ENCODE measurements at regions of chr1 and their contacts with region 1.

Region 1: GRCh38 chr1:221203224-221204054 is 324.2 kb downstream of the HLX start:
- DNase-seq: peak; percentile 61
- H3K4me3 ChIP-seq: no peak overlapping the region
- H3K27ac ChIP-seq: no peak overlapping the region
- H3K4me1 ChIP-seq: no peaks in the 10 kb centered on the region
- CTCF ChIP-seq: peak; percentile 84

Region 2: DNA sequence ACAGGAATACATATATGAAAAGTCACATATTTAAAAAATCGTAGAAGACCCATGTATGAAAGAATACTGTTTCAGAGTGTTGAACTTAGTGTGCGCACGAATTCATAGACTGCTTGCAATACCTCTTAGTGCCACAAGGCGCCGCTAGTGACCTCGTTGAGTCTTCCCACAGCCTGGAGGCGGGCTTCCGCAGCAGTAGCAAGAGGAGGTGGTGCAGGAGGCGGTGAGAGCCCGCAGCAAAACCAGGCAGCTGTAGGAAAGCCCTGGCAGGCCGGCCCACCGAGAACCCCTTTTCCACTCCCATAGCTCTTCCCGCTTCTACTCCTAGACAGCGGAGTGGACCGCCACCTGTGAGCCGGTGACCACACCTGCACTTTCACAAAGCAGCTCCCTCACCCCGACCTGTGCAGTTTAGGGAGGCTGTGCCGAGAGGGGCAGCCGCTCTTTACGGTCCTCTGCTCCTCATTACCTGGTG is 393.2 kb before region 1 on chr1:
- CTCF ChIA-PET with region 1: no interaction called
- POLR2A ChIA-PET with region 1: no interaction called
- intact Hi-C with region 1: loop called (anchors 2 kb)
- DNase-seq: peak; percentile 66
- H3K4me3 ChIP-seq: no peak overlapping the region
- H3K27ac ChIP-seq: no peak overlapping the region
- H3K4me1 ChIP-seq: no peaks in the 10 kb centered on the region
- CTCF ChIP-seq: peak; percentile 83

Region 3: DNA sequence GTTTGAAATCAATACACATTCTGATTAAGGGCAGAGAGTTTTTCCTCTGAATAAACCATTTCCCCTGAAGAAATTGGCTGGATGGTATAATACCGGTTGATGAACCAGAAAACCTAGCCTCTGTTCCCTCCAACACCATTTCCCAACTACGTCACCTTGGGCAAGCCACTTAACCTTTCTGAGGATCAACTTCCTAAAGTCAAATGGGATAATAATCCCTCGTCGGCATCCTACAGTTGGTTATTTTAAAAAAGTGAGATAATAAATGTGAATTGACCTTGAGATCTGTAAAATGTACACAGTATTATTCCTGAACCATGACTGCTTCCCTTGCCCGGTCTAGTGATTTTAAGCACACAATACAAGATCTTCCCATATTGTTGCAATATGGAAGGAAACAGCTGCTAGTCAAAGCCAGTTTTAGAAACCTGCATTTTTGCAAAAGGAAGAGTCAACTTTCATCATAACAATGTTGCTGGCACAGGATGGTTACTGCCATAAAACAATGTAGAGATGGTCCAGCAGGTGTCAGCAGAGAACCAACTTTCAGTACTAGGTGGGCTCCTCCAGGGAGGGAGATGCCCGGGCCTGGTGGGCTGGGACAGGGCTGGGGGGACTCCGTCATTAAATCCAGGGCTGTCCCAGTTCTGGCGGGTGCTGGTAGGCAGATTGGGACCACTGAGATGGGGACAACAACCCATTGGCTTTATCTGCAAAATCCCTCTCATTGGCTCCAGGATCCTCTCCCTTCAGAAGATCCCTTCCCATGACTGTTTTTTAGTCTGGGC is 329.4 kb before region 1 on chr1:
- CTCF ChIA-PET with region 1: no interaction called
- POLR2A ChIA-PET with region 1: no interaction called
- intact Hi-C with region 1: loop called (anchors 1 kb)
- DNase-seq: peak; percentile 34
- H3K4me3 ChIP-seq: no peak overlapping the region
- H3K27ac ChIP-seq: no peak overlapping the region
- H3K4me1 ChIP-seq: no peaks in the 10 kb centered on the region
- CTCF ChIP-seq: peak; percentile 79

Region 4: DNA sequence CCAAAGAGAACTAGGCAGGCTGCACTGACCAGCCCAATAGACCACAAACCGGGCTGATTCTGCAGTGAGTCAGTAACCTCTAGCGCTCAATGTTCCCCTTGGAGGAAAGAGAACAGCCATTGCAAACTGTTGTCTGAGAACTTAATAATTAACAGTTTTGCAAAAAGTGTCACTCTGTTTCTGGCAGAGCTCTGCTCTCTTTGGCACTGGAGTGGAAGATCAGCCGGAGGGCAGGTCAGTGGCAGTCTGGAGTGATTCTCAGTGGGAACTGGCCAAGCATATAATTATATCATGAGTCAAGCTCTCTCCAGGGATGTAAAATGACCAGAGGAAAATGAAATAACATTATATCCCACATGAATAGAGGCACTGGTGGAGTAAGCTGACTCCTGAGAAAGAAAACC is 85.9 kb before region 1 on chr1:
- CTCF ChIA-PET with region 1: no interaction called
- POLR2A ChIA-PET with region 1: no interaction called
- intact Hi-C with region 1: no loop called
- DNase-seq: no peak
- H3K4me3 ChIP-seq: no peak overlapping the region
- H3K27ac ChIP-seq: no peak overlapping the region
- H3K4me1 ChIP-seq: no peaks in the 10 kb centered on the region
- CTCF ChIP-seq: no peak

Measured in OCI-LY7 (cell line).